PC-3 (cell line): ENCODE measurements at regions of chr16 and their contacts with region 1.

Region 1: GRCh38 chr16:57863434-57864160 is 61.3 kb upstream of the KIFC3 start:
- DNase-seq: peak; percentile 71
- ATAC-seq: peak; percentile 87
- H3K4me3 ChIP-seq: no peak overlapping the region
- H3K27ac ChIP-seq: no peak overlapping the region
- H3K4me1 ChIP-seq: peaks cover 22% of the 10 kb centered on the region
- H3K27me3 ChIP-seq: no peaks in the 10 kb centered on the region
- CTCF ChIP-seq: peak; percentile 77

Region 2: DNA sequence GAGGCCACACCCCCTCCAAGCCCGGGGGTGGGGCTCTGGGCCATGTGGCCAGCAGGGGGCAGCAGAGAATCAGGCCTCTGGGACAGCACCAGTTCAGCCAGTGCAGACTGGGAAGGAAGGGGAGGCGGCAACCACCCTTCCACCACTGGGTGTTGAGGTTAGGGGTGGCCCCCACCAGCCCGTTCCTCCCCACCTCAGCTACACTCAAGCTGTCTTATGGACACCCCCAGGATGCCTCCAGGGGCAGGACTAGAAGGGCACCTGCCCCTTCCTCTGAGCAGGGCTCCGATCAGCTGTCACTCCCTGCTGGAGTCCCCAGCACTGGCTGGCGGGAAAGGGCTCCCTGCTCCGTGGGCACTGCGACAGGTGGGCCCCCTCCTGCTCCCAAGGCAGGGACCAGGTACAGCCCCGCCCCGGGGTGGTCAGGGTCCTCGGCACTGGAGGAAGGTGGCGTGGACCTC is 106.2 kb before region 1 on chr16:
- CTCF ChIA-PET with region 1: interaction called, 4 read pairs
- POLR2A ChIA-PET with region 1: no interaction called
- intact Hi-C with region 1: loop called (anchors 1 kb)
- DNase-seq: peak; percentile 84
- ATAC-seq: peak; percentile 94
- H3K4me3 ChIP-seq: no peak overlapping the region
- H3K27ac ChIP-seq: no peak overlapping the region
- H3K4me1 ChIP-seq: no peaks in the 10 kb centered on the region
- H3K27me3 ChIP-seq: no peaks in the 10 kb centered on the region
- CTCF ChIP-seq: peak; percentile 83

Region 3: DNA sequence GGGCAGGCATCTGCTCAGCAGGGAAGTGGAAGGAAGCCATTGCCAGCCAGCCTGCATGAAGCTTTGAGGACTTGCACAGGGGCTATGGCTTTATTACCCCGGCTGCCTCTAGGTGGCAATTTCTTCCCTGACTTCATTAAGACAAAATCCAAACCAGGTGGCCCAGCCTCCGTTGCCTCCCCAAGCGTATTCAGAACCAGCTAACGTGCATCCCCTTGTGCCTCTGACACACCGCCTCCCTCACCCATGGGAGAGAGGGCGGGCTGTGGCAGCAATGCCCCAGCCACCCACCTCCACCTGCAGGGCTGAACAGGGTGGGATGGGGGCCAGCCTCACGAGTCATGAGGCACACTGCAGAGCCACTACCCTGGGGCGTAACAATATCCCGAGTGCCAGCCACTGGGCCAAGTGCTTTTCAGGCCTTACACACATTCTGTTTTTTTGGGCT is 68.1 kb before region 1 on chr16:
- CTCF ChIA-PET with region 1: interaction called, 9 read pairs
- POLR2A ChIA-PET with region 1: no interaction called
- intact Hi-C with region 1: loop called (anchors 2 kb)
- DNase-seq: peak; percentile 72
- ATAC-seq: peak; percentile 64
- H3K4me3 ChIP-seq: no peak overlapping the region
- H3K27ac ChIP-seq: no peak overlapping the region
- H3K4me1 ChIP-seq: peaks cover 34% of the 10 kb centered on the region
- H3K27me3 ChIP-seq: no peaks in the 10 kb centered on the region
- CTCF ChIP-seq: peak; percentile 64

Region 4: GRCh38 chr16:57810197-57811031 is 53.2 kb before region 1 on chr16:
- CTCF ChIA-PET with region 1: interaction called, 4 read pairs
- POLR2A ChIA-PET with region 1: interaction called, 19 read pairs
- intact Hi-C with region 1: no loop called
- DNase-seq: peak; percentile 90
- ATAC-seq: peak; percentile 75
- H3K4me3 ChIP-seq: no peak overlapping the region; the same call in 1 of the 2 replicates
- H3K27ac ChIP-seq: peak overlapping the region; percentile 53
- H3K4me1 ChIP-seq: peaks cover 53% of the 10 kb centered on the region
- H3K27me3 ChIP-seq: no peaks in the 10 kb centered on the region
- CTCF ChIP-seq: no peak

Region 5: GRCh38 chr16:57816334-57816745 is 47.3 kb before region 1 on chr16:
- CTCF ChIA-PET with region 1: no interaction called
- POLR2A ChIA-PET with region 1: interaction called, 21 read pairs
- intact Hi-C with region 1: no loop called
- DNase-seq: peak; percentile 95
- ATAC-seq: peak; percentile 85
- H3K4me3 ChIP-seq: no peak overlapping the region
- H3K27ac ChIP-seq: peak overlapping the region; percentile 86
- H3K4me1 ChIP-seq: peaks cover 34% of the 10 kb centered on the region
- H3K27me3 ChIP-seq: no peaks in the 10 kb centered on the region
- CTCF ChIP-seq: no peak

Region 6: DNA sequence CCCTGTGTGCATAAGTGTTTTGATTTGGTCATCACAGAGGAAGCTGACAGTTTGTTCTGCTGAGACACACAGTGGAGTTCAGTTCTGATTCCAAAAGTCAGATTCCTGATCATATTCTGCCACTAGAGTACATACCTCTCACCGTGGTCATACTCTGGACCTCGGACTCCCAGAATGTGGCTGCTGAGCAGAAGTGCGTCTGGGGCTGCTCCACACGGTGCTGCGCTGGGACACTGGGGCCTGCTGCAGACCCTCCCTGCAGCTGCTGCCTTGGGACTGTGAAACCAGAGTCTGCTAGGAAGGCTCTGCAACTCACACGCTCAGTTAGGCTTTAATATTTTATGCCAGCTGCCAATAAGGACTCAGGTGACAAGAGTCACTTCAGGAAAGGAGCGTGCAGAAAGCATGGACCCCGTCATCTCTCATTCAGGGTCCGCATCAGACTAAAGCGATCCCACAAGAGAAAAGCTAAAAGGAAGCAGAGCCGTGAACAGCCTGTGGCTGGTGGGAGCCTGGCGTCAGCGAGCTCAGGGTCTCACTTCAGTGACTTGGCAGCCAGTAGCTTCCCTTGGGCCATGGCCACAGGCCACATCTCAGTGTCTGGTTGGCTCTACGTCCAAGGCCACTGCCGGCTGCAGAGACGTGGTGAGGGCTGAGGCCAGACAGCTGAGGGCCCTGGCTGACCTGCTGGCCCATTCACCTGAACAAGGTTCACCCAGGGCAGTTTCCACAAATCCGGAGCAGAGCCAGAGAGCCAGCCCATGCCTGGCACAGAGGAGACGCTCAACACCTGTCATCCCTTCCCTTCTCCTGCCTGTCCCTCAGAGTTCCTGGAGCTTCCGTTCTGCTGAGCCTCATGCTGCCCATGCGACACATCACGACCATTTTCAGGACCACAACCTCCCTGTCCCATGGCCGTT is 36.6 kb before region 1 on chr16:
- CTCF ChIA-PET with region 1: no interaction called
- POLR2A ChIA-PET with region 1: no interaction called
- intact Hi-C with region 1: no loop called
- DNase-seq: no peak
- ATAC-seq: no peak; the same call in 1 of the 2 replicates
- H3K4me3 ChIP-seq: no peak overlapping the region
- H3K27ac ChIP-seq: no peak overlapping the region
- H3K4me1 ChIP-seq: peaks cover 4% of the 10 kb centered on the region; the same call in 1 of the 2 replicates
- H3K27me3 ChIP-seq: no peaks in the 10 kb centered on the region
- CTCF ChIP-seq: no peak

Region 7: GRCh38 chr16:58652461-58653140 is 789.0 kb after region 1 on chr16:
- CTCF ChIA-PET with region 1: no interaction called
- POLR2A ChIA-PET with region 1: no interaction called
- intact Hi-C with region 1: no loop called
- DNase-seq: no peak
- ATAC-seq: no peak
- H3K4me3 ChIP-seq: no peak overlapping the region
- H3K27ac ChIP-seq: no peak overlapping the region
- H3K4me1 ChIP-seq: no peaks in the 10 kb centered on the region
- H3K27me3 ChIP-seq: no peaks in the 10 kb centered on the region
- CTCF ChIP-seq: no peak